Activated T-helper 1 cell treated with anti-CD3 and anti-CD28 coated beads, Interleukin-12 subunit alpha, Interleukin-12 subunit beta, Interleukin-2, Interleukin-4 antibody, amounts not matched to agents 30 ng/mL and 10 ng/mL and 1 ng/mL, durations not matched to agents 14 hours and 24 hours and 36 hours (primary cell): ENCODE measurements at regions of chr2 and their contacts with region 1.

Region 1: GRCh38 chr2:191114403-191114886 is 36.3 kb downstream of the STAT4 start:
- DNase-seq: peak; percentile 26
- H3K4me3 Mint-ChIP-seq: peak overlapping the region; percentile 69
- H3K27ac Mint-ChIP-seq: peak overlapping the region; percentile 96
- H3K4me1 Mint-ChIP-seq: peaks cover 63% of the 10 kb centered on the region
- H3K27me3 Mint-ChIP-seq: no peaks in the 10 kb centered on the region

Region 2: GRCh38 chr2:190718652-190719526 is 395.6 kb before region 1 on chr2:
- intact Hi-C with region 1: loop called (anchors 1 kb)
- DNase-seq: peak; percentile 16
- H3K4me3 Mint-ChIP-seq: peak overlapping the region; percentile 43
- H3K27ac Mint-ChIP-seq: peak overlapping the region; percentile 81
- H3K4me1 Mint-ChIP-seq: peaks cover 64% of the 10 kb centered on the region
- H3K27me3 Mint-ChIP-seq: no peaks in the 10 kb centered on the region

Region 3: GRCh38 chr2:190911813-190912212 is 202.6 kb before region 1 on chr2:
- intact Hi-C with region 1: loop called (anchors 2 kb)
- DNase-seq: no peak
- H3K4me3 Mint-ChIP-seq: no peak overlapping the region
- H3K27ac Mint-ChIP-seq: peak overlapping the region; percentile 76
- H3K4me1 Mint-ChIP-seq: peaks cover 29% of the 10 kb centered on the region
- H3K27me3 Mint-ChIP-seq: no peaks in the 10 kb centered on the region

Region 4: DNA sequence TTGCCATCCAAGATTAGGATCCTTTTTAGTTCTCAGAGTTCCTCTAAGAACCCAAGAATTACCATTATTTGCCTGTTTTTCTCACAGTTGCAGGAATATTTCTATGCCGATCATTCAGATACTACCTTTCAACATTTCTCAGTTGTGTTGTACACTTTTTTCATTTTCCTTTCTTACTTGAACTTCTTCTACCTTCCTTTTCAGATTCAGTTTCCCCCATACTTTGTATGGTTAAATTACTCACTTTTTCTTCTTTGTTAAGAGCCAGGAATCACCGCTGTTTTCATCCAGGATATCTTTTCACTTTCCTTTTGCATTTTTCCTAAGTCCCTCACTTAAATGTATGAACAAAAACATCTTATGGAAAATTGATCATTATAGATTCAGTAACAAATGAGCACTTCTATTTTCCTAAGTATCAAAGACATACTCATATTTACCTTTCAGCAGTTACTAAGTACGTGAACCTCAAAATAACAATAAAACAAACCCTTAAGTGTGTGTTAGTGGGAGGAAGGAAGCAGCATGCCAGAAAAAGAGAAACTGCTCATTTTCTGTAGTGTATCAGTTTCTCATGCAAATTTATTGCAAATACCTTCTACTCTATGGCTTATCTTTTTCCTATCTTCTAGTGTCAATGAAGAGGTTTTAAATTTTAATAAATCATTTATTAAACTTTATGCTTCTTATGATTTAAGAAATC is 36.1 kb before region 1 on chr2:
- intact Hi-C with region 1: loop called (anchors 1 kb)
- DNase-seq: no peak
- H3K4me3 Mint-ChIP-seq: peak overlapping the region; percentile 60
- H3K27ac Mint-ChIP-seq: peak overlapping the region; percentile 89
- H3K4me1 Mint-ChIP-seq: peaks cover 31% of the 10 kb centered on the region
- H3K27me3 Mint-ChIP-seq: no peaks in the 10 kb centered on the region

Region 5: GRCh38 chr2:191189112-191189635 is 74.7 kb after region 1 on chr2:
- intact Hi-C with region 1: loop called (anchors 1 kb)
- DNase-seq: no peak
- H3K4me3 Mint-ChIP-seq: no peak overlapping the region
- H3K27ac Mint-ChIP-seq: no peak overlapping the region
- H3K4me1 Mint-ChIP-seq: peaks cover 56% of the 10 kb centered on the region
- H3K27me3 Mint-ChIP-seq: no peaks in the 10 kb centered on the region

Region 6: GRCh38 chr2:191677646-191678436 is 563.4 kb after region 1 on chr2 and contains the start of gene NABP1:
- intact Hi-C with region 1: loop called (anchors 1 kb)
- DNase-seq: peak; percentile 98
- H3K4me3 Mint-ChIP-seq: peak within 1 kb of the TSS; percentile 94
- H3K27ac Mint-ChIP-seq: peak within 1 kb of the TSS; percentile 98
- H3K4me1 Mint-ChIP-seq: peaks cover 63% of the 10 kb centered on the region
- H3K27me3 Mint-ChIP-seq: no peaks in the 10 kb centered on the region
- total RNA-seq, gene NABP1: 51.0 and 58.4 TPM in 2 replicates